Naive thymus-derived CD8-positive, alpha-beta T cell (primary cell): ENCODE measurements at regions of chr3 and their contacts with region 1.

Region 1: GRCh38 chr3:13346481-13347389 is 73.4 kb downstream of the NUP210 start:
- DNase-seq: peak; percentile 50 to 91 (median 78)
- ATAC-seq: peak; percentile 87
- H3K4me3 Mint-ChIP-seq: peak overlapping the region; percentile 40 to 88 (median 68)
- H3K27ac Mint-ChIP-seq: peak overlapping the region; percentile 86 to 96 (median 91)
- H3K4me1 Mint-ChIP-seq: peaks cover 38 to 74% (median 67%) of the 10 kb centered on the region in 4 donors
- H3K27me3 Mint-ChIP-seq: no peaks in the 10 kb centered on the region

Region 2: GRCh38 chr3:13357074-13357473 is 10.3 kb after region 1 on chr3:
- POLR2A ChIA-PET with region 1: interaction called, 16 read pairs
- DNase-seq: no peak
- ATAC-seq: no peak
- H3K4me3 Mint-ChIP-seq: no peak overlapping the region
- H3K27ac Mint-ChIP-seq: peak overlapping the region in 4 of 10 donors; percentile 24 to 56 (median 42)
- H3K4me1 Mint-ChIP-seq: peaks cover 10 to 22% (median 15%) of the 10 kb centered on the region in 4 donors
- H3K27me3 Mint-ChIP-seq: no peaks in the 10 kb centered on the region

Region 3: DNA sequence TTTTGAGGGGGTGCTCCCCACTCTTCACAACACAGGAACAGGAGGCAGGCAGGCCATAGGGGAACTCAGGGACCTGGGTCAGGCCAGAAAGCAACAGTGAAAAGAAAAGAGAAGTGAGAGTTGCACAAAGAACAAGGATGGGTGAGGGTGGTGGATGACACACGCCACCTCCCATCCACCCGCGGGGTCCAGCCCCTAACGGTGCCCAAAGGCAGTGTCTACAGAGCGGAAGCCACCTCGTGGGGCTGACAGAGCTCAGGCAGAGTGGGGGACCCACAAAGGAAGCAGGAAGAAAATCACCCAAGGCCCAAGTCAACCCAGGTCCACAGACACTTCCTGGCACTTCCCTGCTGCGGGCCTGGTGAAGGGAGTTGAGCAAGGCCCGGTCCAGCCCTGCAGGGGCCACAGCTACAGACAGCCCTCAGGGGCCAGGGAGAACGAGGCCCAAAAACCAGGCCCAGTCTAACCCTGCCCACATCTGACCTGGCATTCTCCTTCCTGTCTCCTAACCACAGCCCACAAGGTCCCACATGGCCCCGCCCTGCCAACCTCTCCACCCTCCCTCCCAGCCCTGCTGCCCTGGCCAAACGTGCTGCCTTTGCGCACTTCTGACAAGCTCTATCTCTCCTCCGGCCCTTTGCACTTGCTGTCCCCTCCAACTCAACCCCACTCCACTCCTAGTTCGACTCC is 67.5 kb after region 1 on chr3:
- POLR2A ChIA-PET with region 1: interaction called, 48 read pairs
- DNase-seq: peak; percentile 48 to 85 (median 74)
- ATAC-seq: peak; percentile 91 to 93
- H3K4me3 Mint-ChIP-seq: peak overlapping the region; percentile 65 to 93 (median 88)
- H3K27ac Mint-ChIP-seq: peak overlapping the region; percentile 91 to 99 (median 96)
- H3K4me1 Mint-ChIP-seq: peaks cover 31 to 80% (median 67%) of the 10 kb centered on the region in 4 donors
- H3K27me3 Mint-ChIP-seq: no peaks in the 10 kb centered on the region

Region 4: DNA sequence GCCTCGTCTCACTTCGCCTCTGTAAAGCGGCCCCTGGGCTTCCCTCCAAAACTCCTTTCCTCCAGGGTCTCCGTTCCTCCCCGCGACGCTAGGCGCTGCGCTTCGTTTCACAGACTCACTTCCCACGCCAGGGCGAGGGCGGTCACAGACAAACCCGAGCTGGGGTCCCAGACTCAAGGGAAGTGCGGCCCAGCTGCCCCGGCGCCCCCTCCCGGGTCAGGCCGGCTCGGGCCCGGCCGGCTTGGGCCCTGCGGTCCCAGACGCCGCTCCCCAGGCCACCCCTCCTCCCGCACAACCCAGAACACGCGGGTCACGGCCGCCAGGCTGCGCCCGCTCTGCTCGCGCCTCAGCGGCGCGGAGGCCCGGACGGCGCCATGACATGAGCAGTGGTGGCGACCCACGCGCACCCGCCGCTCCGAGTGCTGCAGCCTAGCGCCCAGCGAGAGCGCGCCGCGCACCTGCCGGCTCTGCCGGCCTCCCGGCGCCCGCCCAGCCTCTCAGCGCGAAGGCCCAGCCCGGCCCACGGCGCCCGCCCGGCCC is 72.8 kb after region 1 on chr3:
- POLR2A ChIA-PET with region 1: interaction called, 48 read pairs
- DNase-seq: peak; percentile 43 to 70 (median 60)
- ATAC-seq: peak; percentile 44 to 67
- H3K4me3 Mint-ChIP-seq: peak overlapping the region; percentile 87 to 95 (median 91)
- H3K27ac Mint-ChIP-seq: peak overlapping the region; percentile 91 to 99 (median 96)
- H3K4me1 Mint-ChIP-seq: peaks cover 33 to 72% (median 66%) of the 10 kb centered on the region in 4 donors
- H3K27me3 Mint-ChIP-seq: no peaks in the 10 kb centered on the region

Region 5: GRCh38 chr3:13479581-13480339 is 133.0 kb after region 1 on chr3 and contains the start of gene HDAC11:
- POLR2A ChIA-PET with region 1: interaction called, 11 read pairs
- DNase-seq: peak; percentile 93 to 99 (median 96)
- ATAC-seq: peak; percentile 89 to 90
- H3K4me3 Mint-ChIP-seq: peak within 1 kb of the TSS; percentile 88 to 97 (median 93)
- H3K27ac Mint-ChIP-seq: peak within 1 kb of the TSS; percentile 54 to 97 (median 96)
- H3K4me1 Mint-ChIP-seq: peaks cover 4 to 36% (median 21%) of the 10 kb centered on the region in 4 donors
- H3K27me3 Mint-ChIP-seq: no peaks in the 10 kb centered on the region
- polyA plus RNA-seq, gene HDAC11: 3.1 to 5.8 (median 3.7) TPM